ENCODE measurements at regions of chr5 and their contacts with region 1.

Region 1: GRCh38 chr5:65102828-65103711 is 334.3 kb downstream of the CWC27 start:
- DNase-seq: peak; percentile 68
- ATAC-seq: peak; percentile 87 to 90

Region 2: GRCh38 chr5:64811050-64811640 is 291.9 kb before region 1 on chr5:
- intact Hi-C with region 1: loop called in 1 of 2 experiments (anchors 5 kb)
- DNase-seq: no peak
- ATAC-seq: peak in 1 of 2 donors; percentile 65

Region 3: DNA sequence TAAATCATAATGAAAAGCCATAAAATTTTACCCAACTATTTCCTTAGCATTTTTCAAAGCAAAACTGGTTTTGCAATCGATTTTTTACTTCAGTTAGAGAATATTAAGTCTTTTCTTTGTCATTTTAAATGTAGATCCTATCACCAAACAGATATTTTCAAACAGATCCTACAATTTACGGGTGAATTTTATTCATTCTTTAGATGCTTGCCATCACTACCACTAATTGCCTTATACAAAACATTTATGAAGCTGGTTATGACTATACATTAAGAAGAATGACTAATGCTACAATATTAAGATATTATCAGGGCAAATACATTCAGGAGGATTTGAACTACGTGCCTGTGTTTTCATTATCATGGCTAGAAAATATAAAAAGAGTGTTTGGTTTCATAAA is 137.5 kb before region 1 on chr5:
- intact Hi-C with region 1: loop called in 1 of 2 experiments (anchors 10 kb)
- DNase-seq: no peak
- ATAC-seq: no peak

Region 4: DNA sequence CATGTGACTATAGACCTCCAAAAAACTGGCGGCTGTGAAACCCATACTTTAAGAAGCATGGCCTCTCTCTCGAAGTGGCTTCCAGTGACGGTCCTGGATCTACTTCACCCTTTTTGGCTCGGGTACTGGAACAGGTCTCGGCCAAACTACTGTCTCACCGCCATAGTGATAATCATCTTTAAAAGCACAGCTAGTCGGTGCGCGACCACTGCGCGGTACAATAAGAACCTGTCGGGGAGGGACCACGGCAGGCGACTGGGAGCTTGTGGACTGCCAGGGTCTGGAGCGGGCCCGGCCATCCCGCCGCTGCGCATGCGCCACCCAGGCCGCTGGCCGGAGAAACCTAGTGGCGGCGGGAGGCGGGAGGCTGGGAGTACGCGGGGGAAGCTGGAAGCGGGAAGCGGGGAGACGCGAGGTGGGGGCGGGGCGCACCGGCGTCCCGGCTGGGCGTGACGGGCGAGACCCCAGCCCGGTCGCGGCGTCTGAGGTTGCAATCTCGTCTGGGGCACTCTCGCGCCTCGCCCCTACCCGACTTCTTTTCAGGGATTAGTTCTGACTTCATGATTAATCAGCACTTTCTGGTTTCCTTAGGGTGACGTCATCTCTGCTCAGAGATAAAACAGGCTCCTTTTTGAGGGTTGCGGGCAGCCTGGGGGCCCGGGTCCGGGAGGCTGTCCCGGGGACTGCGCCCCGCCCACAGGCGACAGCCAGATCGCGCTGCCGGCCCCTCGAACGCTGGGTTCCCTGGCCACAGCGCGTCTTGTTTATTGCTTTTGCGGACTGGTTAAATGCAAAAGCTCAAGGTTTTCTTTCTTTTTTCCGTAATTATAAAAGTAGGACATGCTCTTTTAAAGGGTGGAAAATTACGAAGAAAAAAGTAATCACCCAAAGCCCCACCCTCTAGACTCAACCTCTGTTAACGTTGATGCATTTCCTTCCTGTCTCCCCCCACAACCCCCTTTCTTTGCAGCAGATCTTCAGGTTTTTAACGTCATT is 67.6 kb before region 1 on chr5:
- intact Hi-C with region 1: loop called in 1 of 2 experiments (anchors 10 kb)
- DNase-seq: peak; percentile 92
- ATAC-seq: peak; percentile 96